ENCODE measurements at regions of chr3 and their contacts with region 1.

Region 1: GRCh38 chr3:113947372-113948014 is at the start of gene ZDHHC23:
- DNase-seq: peak; percentile 71
- H3K4me3 Mint-ChIP-seq: peak within 1 kb of the TSS; percentile 74
- H3K27ac Mint-ChIP-seq: peak within 1 kb of the TSS; percentile 52
- H3K4me1 Mint-ChIP-seq: peaks cover 12% of the 10 kb centered on the region
- H3K27me3 Mint-ChIP-seq: peaks cover 14% of the 10 kb centered on the region
- total RNA-seq, gene ZDHHC23: 5.4 to 6.6 TPM

Region 2: DNA sequence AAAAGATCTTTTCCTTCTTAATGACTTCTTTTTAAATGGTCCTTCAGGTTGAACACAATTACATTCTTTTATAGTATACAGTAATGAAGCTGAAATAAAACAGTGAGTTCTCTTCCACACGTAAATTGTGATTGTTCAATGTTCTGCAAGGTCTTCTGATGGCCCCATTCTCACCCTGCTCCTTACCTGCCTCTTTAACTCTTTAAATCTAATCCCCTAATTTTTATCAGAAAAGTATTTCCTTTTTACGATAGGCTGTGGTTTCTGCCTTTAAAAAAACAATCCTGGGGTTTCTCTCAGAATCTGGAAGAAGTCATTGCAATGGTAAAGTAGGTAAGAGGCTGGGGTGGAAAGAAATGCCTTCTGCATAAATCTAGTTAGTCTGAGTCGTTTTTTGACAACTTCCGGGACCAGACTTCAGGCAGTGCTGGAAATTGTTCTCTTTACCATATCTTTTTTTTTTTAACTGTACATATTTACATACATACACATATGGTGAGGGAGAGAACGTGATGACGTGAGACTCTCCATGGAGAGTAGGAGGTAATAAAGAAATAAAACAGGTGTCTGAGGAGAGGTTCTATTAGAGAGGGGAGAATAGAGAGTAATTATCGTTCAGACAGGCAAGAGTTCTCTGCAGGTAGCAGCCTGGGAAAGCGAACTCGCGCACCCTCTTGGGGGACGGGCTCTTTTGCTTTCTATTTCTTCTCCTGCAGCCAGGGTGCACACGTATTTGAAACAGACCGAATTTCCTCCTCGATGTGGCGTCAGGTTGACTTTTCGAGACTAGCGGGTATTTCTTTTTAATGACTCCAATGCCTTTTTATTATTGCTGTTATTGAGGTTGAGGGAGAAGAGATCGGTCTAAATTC is 415.4 kb before region 1 on chr3 and contains the start of gene SIDT1:
- CTCF ChIA-PET with region 1: no interaction called
- POLR2A ChIA-PET with region 1: no interaction called
- intact Hi-C with region 1: loop called (anchors 5 kb)
- DNase-seq: peak; percentile 79
- H3K4me3 Mint-ChIP-seq: peak within 1 kb of the TSS; percentile 98
- H3K27ac Mint-ChIP-seq: peak within 1 kb of the TSS; percentile 96
- H3K4me1 Mint-ChIP-seq: peaks cover 45% of the 10 kb centered on the region
- H3K27me3 Mint-ChIP-seq: peaks cover 1% of the 10 kb centered on the region
- total RNA-seq, gene SIDT1: 11.3 TPM

Region 3: DNA sequence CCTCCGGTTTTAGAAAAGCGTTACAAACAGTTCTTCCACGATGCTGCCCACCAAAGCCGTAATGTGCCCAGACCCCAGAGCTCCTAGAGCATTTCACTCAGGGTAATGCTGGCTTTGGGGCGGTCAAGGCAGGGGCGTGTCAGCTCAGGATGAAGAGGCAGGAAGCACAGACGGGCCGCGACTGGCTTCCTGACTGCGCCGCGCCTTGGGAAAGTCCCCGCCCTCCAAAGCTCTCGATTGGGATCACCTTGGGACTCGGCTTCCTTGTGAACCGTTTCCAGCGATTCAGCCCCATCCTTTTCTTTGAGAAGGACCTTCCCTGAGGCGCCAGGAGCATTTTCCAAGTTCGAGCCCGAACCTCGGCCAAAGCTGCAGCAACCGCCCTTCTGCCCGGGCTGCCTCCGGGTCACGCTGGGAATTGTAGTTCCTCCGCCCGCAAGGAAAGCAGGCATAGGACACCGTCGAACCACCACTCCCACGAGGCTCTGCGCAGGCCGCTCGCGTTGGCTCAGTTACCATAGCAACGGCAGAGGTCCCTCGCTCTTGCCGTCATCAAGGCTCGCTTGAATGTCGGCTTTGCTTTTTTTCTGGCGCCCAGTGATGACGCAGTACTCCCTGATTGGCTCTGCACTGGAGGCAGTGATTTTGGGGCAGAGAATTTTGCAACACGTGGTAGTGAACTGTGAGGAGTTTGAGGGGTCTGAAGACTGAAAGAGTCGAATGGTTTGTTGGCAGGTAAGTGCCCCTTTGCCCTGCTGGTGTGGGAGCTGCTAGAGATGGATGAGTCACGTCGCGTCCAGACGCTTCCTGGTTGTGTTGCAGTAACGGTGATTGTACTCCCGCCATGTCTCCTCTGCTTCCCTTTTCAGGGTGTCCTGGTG is 108.9 kb after region 1 on chr3 and contains the starts of genes CCDC191 and QTRT2:
- CTCF ChIA-PET with region 1: no interaction called
- POLR2A ChIA-PET with region 1: no interaction called
- intact Hi-C with region 1: loop called (anchors 1 kb)
- DNase-seq: peak; percentile 99
- H3K4me3 Mint-ChIP-seq: peak within 1 kb of the TSS; percentile 94
- H3K27ac Mint-ChIP-seq: peak within 1 kb of the TSS; percentile 89
- H3K4me1 Mint-ChIP-seq: peaks cover 28% of the 10 kb centered on the region
- H3K27me3 Mint-ChIP-seq: no peaks in the 10 kb centered on the region
- total RNA-seq, gene CCDC191: 3.5 TPM
- total RNA-seq, gene QTRT2: 27.2 to 30.7 TPM

Measured in activated CD4-positive, alpha-beta memory T cell treated with anti-CD3 and anti-CD28 coated beads for 36 hours (primary cell).